ENCODE measurements at regions of chr1 and their contacts with region 1.

Region 1: GRCh38 chr1:155277070-155277895 is at the start of gene HCN3:
- DNase-seq: peak; percentile 98 to 99
- H3K4me3 ChIP-seq: peak within 1 kb of the TSS; percentile 87
- H3K4me3 Mint-ChIP-seq: peak within 1 kb of the TSS; percentile 47
- H3K27ac Mint-ChIP-seq: no peak within 1 kb of the TSS
- H3K4me1 ChIP-seq: 0 out of 2 replicates have a peak, but pooled peaks cover 8% of the 10 kb centered on the region
- H3K4me1 Mint-ChIP-seq: peaks cover 25% of the 10 kb centered on the region
- H3K27me3 ChIP-seq: no peaks in the 10 kb centered on the region
- H3K27me3 Mint-ChIP-seq: no peaks in the 10 kb centered on the region
- CTCF ChIP-seq: peak; percentile 47 to 79
- total RNA-seq, gene HCN3: 8.0 and 8.8 TPM in 2 replicates

Region 2: DNA sequence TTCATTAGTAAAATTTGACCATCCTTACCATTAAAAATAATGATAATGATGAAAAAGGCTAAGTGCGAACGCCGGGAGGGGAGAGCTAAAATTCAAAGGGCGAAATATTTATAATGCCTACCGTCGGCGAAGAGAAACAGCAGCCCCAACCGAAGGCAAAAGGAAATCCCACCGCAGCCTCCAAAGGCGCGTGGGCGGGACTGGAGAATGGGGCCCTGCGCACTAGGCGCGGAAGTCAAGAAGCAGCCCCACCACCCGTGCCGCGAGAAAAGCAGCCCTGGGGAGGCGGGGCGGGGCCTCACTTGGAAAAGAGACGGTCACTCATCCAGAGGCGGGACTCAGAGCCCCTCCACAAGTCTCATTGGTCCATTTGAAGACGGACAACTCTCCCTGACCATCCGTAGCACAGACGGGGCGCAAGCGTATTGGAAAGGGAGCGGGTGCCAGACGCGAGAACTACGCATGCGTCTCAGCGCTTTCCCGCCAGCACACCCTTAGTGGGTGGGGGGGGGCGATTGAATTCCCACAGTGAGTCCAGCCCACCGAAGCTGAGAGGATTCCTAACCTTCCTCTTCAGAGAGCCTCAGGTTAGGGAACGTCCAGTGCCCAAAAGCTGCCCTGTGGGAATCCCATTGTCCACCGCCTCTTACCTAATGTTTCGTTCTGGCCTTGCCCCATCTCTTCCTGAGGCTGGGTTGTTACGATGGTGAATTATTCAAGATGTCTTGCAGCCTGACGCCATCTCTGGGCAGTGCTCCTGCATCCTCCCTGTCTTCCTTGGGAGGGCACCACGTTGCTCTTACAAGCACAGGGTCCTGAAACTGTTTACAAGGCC is 49.8 kb before region 1 on chr1:
- CTCF ChIA-PET with region 1: no interaction called
- POLR2A ChIA-PET with region 1: no interaction called
- intact Hi-C with region 1: no loop called
- DNase-seq: peak; percentile 99
- H3K4me3 ChIP-seq: peak overlapping the region; percentile 62
- H3K4me3 Mint-ChIP-seq: peak overlapping the region; percentile 81
- H3K27ac Mint-ChIP-seq: peak overlapping the region; percentile 80
- H3K4me1 ChIP-seq: peaks cover 22% of the 10 kb centered on the region
- H3K4me1 Mint-ChIP-seq: peaks cover 25% of the 10 kb centered on the region
- H3K27me3 ChIP-seq: no peaks in the 10 kb centered on the region
- H3K27me3 Mint-ChIP-seq: no peaks in the 10 kb centered on the region
- CTCF ChIP-seq: no peak

Region 3: DNA sequence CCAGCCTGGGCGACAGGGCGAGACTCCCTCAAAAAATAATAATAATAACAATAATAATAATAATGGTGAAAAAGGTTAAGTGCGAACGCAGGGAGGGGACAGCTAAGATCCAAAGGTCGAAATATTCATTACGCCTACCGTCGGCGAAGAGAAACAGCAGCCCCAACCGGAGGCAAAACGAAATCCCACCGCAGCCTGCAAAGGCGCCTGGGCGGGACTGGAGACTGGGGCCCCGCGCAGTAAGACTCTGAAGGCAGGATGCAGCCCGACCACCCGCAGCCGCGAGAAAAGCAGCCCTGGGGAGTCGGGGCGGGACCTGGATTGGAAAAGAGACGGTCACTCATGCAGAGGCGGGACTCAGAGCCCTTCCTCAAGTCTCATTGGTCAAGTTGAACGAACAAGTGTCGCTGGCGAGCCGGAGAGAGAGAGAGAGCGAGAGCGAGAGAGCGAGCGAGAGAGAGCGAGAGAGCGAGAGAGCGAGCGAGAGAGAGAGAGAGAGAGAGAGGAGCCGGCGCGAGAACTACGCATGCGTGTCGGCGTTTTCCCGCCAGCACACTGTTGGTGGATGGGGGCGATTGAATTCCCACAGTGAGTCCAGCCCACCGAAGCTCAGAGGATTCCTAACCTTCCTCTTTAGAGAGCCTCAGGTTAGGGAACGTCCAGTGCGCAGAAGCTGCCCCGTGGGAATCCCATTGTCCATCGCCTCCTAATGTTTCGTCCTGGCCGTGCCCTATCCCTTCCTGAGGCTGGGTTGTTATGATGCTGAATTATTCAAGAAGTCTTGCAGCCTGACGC is 32.7 kb before region 1 on chr1:
- CTCF ChIA-PET with region 1: interaction called, 8 read pairs
- POLR2A ChIA-PET with region 1: interaction called, 10 read pairs
- intact Hi-C with region 1: loop called (anchors 1 kb)
- DNase-seq: peak; percentile 98 to 99
- H3K4me3 ChIP-seq: peak overlapping the region; percentile 70
- H3K4me3 Mint-ChIP-seq: peak overlapping the region; percentile 70
- H3K27ac Mint-ChIP-seq: peak overlapping the region; percentile 71
- H3K4me1 ChIP-seq: peaks cover 6% of the 10 kb centered on the region; the same call in 1 of the 2 replicates
- H3K4me1 Mint-ChIP-seq: peaks cover 24% of the 10 kb centered on the region
- H3K27me3 ChIP-seq: no peaks in the 10 kb centered on the region
- H3K27me3 Mint-ChIP-seq: peaks cover 3% of the 10 kb centered on the region
- CTCF ChIP-seq: no peak

Region 4: GRCh38 chr1:155261852-155262673 is 15.2 kb before region 1 on chr1 and contains the start of gene SCAMP3:
- CTCF ChIA-PET with region 1: interaction called, 7 read pairs
- POLR2A ChIA-PET with region 1: interaction called, 18 read pairs
- intact Hi-C with region 1: loop called (anchors 1 kb)
- DNase-seq: peak; percentile 94 to 97
- H3K4me3 ChIP-seq: peak within 1 kb of the TSS; percentile 65
- H3K4me3 Mint-ChIP-seq: peak within 1 kb of the TSS; percentile 95
- H3K27ac Mint-ChIP-seq: peak within 1 kb of the TSS; percentile 94
- H3K4me1 ChIP-seq: peaks cover 4% of the 10 kb centered on the region
- H3K4me1 Mint-ChIP-seq: peaks cover 23% of the 10 kb centered on the region
- H3K27me3 ChIP-seq: no peaks in the 10 kb centered on the region
- H3K27me3 Mint-ChIP-seq: no peaks in the 10 kb centered on the region
- CTCF ChIP-seq: no peak
- total RNA-seq, gene SCAMP3: 53.4 and 55.9 TPM in 2 replicates

Region 5: DNA sequence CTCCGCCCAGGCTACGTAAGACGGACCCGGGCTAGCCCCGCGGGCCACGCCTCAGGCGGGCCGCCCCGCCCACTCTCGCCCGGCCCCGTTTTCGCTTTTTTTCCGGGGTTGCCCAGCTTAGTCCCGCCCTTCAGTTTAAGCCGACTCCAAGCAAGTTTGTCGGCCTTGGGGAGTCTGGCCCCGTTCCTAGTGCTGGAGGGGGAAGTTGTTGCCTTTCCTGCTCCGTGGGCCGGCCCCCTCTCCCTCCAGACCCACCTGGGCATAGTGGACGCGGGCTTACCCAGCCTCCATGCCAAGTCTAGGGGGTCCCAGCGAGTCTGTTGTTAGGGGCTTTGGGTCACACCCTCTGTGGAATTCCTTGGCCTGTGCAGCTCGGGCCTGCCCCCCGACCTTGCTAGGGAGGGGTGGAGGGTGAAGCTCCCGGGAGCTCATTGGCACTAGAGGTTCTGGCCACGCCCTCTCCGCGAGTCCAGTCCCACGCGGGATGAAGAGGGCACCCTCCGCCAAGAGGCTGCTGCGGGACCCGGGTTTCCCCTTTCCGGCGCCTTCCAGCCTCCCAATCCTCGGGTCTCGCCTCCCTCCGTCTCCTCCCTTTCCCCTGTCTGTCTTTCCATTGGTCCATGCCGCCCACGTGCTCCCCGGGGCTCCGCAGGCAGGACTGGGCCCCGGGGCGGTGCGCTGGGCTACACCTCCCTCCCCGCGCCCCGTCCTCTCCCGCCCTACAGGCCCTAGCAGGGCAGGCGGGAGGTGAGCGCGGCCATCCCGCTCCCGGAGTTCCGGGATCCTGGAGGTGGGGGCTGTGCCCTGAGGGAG is 46.7 kb after region 1 on chr1:
- CTCF ChIA-PET with region 1: interaction called, 20 read pairs
- POLR2A ChIA-PET with region 1: interaction called, 16 read pairs
- intact Hi-C with region 1: loop called (anchors 1 kb)
- DNase-seq: peak; percentile 96 to 98
- H3K4me3 ChIP-seq: peak overlapping the region; percentile 88
- H3K4me3 Mint-ChIP-seq: peak overlapping the region; percentile 94
- H3K27ac Mint-ChIP-seq: peak overlapping the region; percentile 88
- H3K4me1 ChIP-seq: peaks cover 11% of the 10 kb centered on the region
- H3K4me1 Mint-ChIP-seq: peaks cover 16% of the 10 kb centered on the region
- H3K27me3 ChIP-seq: no peaks in the 10 kb centered on the region
- H3K27me3 Mint-ChIP-seq: no peaks in the 10 kb centered on the region
- CTCF ChIP-seq: no peak

Region 6: GRCh38 chr1:155859234-155859829 is 582.0 kb after region 1 on chr1 and contains the start of gene SYT11:
- CTCF ChIA-PET with region 1: no interaction called
- POLR2A ChIA-PET with region 1: interaction called, 10 read pairs
- intact Hi-C with region 1: no loop called
- DNase-seq: peak; percentile 94
- H3K4me3 ChIP-seq: peak within 1 kb of the TSS; percentile 48
- H3K4me3 Mint-ChIP-seq: peak within 1 kb of the TSS; percentile 77
- H3K27ac Mint-ChIP-seq: peak within 1 kb of the TSS; percentile 40
- H3K4me1 ChIP-seq: peaks cover 6% of the 10 kb centered on the region
- H3K4me1 Mint-ChIP-seq: peaks cover 6% of the 10 kb centered on the region
- H3K27me3 ChIP-seq: no peaks in the 10 kb centered on the region
- H3K27me3 Mint-ChIP-seq: peaks cover 5% of the 10 kb centered on the region
- CTCF ChIP-seq: no peak
- total RNA-seq, gene SYT11: 0.05 TPM in 1 of 2 replicates, not detected in the other